Ovary (tissue), 10 donors: ENCODE measurements at regions of chr11 and their contacts with region 1.

Region 1: GRCh38 chr11:27183672-27184457 is 143.2 kb downstream of the BBOX1 start:
- DNase-seq: peak in 4 of 5 donors; percentile 55 to 74 (median 63)
- H3K4me3 ChIP-seq: no peak overlapping the region
- H3K27ac ChIP-seq: no peak overlapping the region
- H3K4me1 ChIP-seq: peaks cover 3% of the 10 kb centered on the region
- H3K27me3 ChIP-seq: no peaks in the 10 kb centered on the region
- CTCF ChIP-seq: peak; percentile 78 to 91 (median 87)
- EP300 ChIP-seq: no peak
- POLR2A ChIP-seq: no peak

Region 2: GRCh38 chr11:27100534-27100933 is 83.3 kb before region 1 on chr11:
- intact Hi-C with region 1: no loop called
- DNase-seq: no peak
- H3K4me3 ChIP-seq: no peak overlapping the region
- H3K27ac ChIP-seq: no peak overlapping the region
- H3K4me1 ChIP-seq: no peaks in the 10 kb centered on the region
- H3K27me3 ChIP-seq: no peaks in the 10 kb centered on the region
- CTCF ChIP-seq: no peak
- EP300 ChIP-seq: no peak
- POLR2A ChIP-seq: no peak

Region 3: DNA sequence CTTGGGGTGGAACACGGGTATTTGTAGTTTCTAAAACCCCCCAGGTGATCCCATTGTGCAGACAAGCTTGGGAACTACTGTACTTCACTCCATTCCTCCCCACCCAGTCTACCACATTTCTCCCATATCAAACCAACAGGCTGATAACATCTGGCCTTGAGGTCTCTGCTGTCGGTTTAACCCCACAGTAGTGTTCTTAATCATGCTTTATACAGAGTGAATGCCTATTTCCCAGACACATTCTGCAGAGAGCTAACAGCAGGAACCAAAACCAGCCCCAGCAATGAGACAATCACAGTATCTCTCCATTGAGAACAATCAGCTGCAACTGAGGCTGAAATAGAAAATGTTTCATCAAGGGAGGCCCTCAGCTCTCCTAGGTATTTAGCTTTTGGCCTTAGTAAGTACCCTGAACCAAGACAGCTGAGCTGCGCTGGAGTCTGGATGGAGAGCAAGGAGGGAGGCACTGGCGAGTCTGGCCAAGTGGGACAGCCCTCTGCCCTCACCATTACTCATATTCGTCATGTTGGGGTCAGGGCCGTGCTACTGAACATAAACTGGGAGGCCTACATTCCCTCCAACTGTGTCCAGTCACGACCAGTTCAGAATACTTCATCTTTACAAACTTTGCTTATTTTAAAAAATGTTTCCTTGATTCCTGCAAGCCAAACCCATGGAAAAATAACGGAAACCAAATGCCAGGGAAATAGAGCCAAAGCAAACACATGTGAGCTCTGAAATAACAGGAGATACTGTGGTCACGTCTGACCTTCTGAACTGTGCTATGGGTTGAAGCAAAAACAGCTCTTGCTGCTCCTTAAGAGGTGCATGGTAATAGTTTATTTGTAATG is 98.1 kb after region 1 on chr11:
- intact Hi-C with region 1: loop called in 1 of 4 experiments (anchors 5 kb)
- DNase-seq: peak; percentile 70 to 79 (median 77)
- H3K4me3 ChIP-seq: no peak overlapping the region
- H3K27ac ChIP-seq: peak overlapping the region in 1 of 2 donors; percentile 61
- H3K4me1 ChIP-seq: peaks cover 10% of the 10 kb centered on the region
- H3K27me3 ChIP-seq: no peaks in the 10 kb centered on the region
- CTCF ChIP-seq: no peak
- EP300 ChIP-seq: no peak
- POLR2A ChIP-seq: no peak

Region 4: DNA sequence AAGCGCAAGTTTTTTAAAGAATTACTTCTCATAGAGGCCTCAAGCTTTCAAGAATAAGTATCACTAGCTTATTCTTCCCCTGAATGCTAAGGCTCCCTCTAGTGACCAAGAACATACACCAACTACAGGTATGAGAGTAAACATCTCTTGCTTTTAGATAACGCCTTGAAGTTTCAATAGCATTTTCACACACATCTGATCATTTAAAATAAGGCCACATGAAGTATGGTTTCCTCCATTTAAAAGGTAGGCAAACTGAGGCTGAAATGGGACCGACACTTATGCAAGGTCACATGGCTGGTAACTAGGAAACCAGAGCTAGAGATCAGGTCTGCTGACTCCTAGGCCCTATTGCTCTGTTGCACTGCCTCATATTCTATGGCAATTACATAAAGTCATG is 112.6 kb after region 1 on chr11:
- intact Hi-C with region 1: loop called in 2 of 4 experiments (anchors 10 kb)
- DNase-seq: no peak
- H3K4me3 ChIP-seq: no peak overlapping the region
- H3K27ac ChIP-seq: no peak overlapping the region
- H3K4me1 ChIP-seq: no peaks in the 10 kb centered on the region
- H3K27me3 ChIP-seq: no peaks in the 10 kb centered on the region
- CTCF ChIP-seq: peak in 2 of 3 donors; percentile 36 to 48
- EP300 ChIP-seq: no peak
- POLR2A ChIP-seq: no peak

Region 5: DNA sequence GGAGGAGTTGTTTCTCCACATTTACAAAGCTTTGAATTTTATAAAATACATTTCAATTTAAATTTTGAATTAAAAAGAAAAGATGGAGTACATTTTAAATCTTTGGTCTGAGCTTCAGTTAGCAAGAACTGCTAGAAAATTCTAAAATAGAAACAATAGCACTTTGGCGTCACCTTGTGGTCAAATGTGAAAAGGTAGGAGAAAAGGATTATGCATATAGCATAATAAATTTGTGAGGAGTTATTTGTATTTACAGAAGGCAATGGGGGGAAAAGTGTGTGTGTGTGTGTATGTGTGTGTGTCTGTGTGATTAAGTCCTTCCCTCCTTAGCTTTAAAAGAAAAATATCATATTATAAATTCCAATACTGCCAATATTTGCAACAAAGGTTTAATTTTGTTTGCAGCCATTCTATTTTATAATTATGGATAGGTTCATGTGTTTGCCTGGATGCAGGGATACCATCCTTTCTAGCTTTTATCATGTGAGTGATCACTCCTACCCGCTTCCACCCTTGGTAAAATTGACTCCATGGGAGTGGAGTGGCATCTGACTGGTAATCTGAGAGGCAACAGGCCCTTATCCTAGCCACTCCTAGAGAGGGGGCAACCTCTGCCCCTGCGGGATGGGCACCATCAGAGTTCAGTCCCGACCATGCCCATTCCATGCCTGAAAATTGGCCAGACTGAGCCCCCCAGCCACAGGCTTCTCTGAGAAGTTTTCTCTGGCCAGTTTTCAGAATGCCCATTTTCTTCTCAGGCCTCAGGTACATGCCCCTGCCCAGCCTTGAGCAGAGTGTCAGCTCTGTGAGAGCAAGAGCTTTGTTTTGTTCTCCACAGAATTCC is 302.3 kb after region 1 on chr11:
- intact Hi-C with region 1: loop called (anchors 2 to 5 kb)
- DNase-seq: peak in 1 of 5 donors; percentile 48
- H3K4me3 ChIP-seq: no peak overlapping the region
- H3K27ac ChIP-seq: no peak overlapping the region
- H3K4me1 ChIP-seq: no peaks in the 10 kb centered on the region
- H3K27me3 ChIP-seq: no peaks in the 10 kb centered on the region
- CTCF ChIP-seq: peak; percentile 78 to 94 (median 86)
- EP300 ChIP-seq: no peak
- POLR2A ChIP-seq: no peak